ENCODE measurements at regions of chr6 and their contacts with region 1.

Region 1: GRCh38 chr6:168699631-168700295 is 258.8 kb downstream of the SMOC2 start:
- DNase-seq: peak; percentile 20
- H3K4me3 ChIP-seq: no peak overlapping the region
- H3K27ac ChIP-seq: no peak overlapping the region
- H3K4me1 ChIP-seq: no peaks in the 10 kb centered on the region
- H3K27me3 ChIP-seq: no peaks in the 10 kb centered on the region
- CTCF ChIP-seq: no peak
- POLR2A ChIP-seq: no peak

Region 2: DNA sequence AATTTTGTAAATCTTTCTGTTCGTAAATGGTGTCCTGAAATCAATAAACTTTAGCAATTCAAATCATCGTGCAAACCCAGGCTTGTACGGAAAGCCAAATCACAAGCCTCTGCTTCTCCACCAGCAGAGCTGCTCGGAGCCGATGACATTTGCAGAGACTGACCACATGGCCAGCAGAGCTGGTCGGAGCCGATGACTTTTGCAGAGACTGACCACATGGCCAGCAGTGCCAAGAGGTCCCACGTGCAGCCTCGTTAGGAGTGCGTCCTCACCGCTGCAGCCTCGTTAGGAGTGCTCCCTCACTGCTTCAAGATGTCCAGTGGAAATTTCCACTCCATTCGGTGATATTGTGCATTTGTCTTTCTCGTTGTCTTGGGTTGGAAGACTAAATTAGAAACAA is 230.2 kb before region 1 on chr6:
- intact Hi-C with region 1: no loop called
- DNase-seq: no peak
- H3K4me3 ChIP-seq: no peak overlapping the region
- H3K27ac ChIP-seq: no peak overlapping the region
- H3K4me1 ChIP-seq: no peaks in the 10 kb centered on the region
- H3K27me3 ChIP-seq: peaks cover 3% of the 10 kb centered on the region
- CTCF ChIP-seq: no peak
- POLR2A ChIP-seq: no peak

Region 3: DNA sequence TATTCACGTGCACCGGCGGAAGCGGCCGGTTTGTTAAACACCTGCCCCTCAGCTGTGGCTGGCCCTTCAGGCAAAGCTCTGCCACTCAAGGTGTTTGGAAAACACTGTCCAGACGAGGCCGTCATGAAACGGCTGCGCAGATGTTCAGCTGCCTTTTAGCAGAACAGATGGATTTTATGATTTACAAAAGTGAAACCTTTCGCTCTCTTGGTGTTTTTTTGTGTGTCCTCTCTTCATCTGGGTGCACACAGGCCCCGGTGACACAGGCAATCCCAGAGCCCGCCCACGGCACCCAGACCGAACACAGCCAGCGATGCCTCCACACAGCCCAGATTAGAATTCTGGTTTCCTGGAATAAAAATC is 138.3 kb after region 1 on chr6:
- intact Hi-C with region 1: loop called (anchors 10 kb)
- DNase-seq: no peak
- H3K4me3 ChIP-seq: no peak overlapping the region
- H3K27ac ChIP-seq: no peak overlapping the region
- H3K4me1 ChIP-seq: no peaks in the 10 kb centered on the region
- H3K27me3 ChIP-seq: no peaks in the 10 kb centered on the region
- CTCF ChIP-seq: no peak
- POLR2A ChIP-seq: no peak

Region 4: GRCh38 chr6:169051371-169051770 is 351.6 kb after region 1 on chr6:
- intact Hi-C with region 1: no loop called
- DNase-seq: no peak
- H3K4me3 ChIP-seq: no peak overlapping the region
- H3K27ac ChIP-seq: no peak overlapping the region
- H3K4me1 ChIP-seq: no peaks in the 10 kb centered on the region
- H3K27me3 ChIP-seq: no peaks in the 10 kb centered on the region
- CTCF ChIP-seq: no peak
- POLR2A ChIP-seq: no peak

Measured in prostate gland (tissue), 2 donors.